Heart left ventricle (tissue), 16 donors: ENCODE measurements at regions of chr2 and their contacts with region 1.

Region 1: GRCh38 chr2:105919826-105920225 is 175.1 kb downstream of the NCK2 start:
- DNase-seq: no peak
- ATAC-seq: peak in 1 of 4 donors; percentile 11
- H3K4me3 ChIP-seq: no peak overlapping the region
- H3K27ac ChIP-seq: peak overlapping the region in 6 of 12 donors; percentile 11 to 67 (median 47)
- H3K4me1 ChIP-seq: peaks cover 0 to 19% (median 0%) of the 10 kb centered on the region in 12 donors
- H3K27me3 ChIP-seq: no peaks in the 10 kb centered on the region
- CTCF ChIP-seq: peak in 11 of 12 donors; percentile 11 to 51 (median 40)
- POLR2A ChIP-seq: no peak

Region 2: GRCh38 chr2:106011380-106011779 is 91.6 kb after region 1 on chr2:
- intact Hi-C with region 1: loop called in 1 of 10 experiments (anchors 10 kb)
- DNase-seq: peak in 1 of 5 donors; percentile 27
- ATAC-seq: peak in 2 of 4 donors; percentile 70 to 97
- H3K4me3 ChIP-seq: no peak overlapping the region
- H3K27ac ChIP-seq: peak overlapping the region in 10 of 12 donors; percentile 38 to 91 (median 75)
- H3K4me1 ChIP-seq: peaks cover 0 to 24% (median 8%) of the 10 kb centered on the region in 12 donors
- H3K27me3 ChIP-seq: no peaks in the 10 kb centered on the region
- CTCF ChIP-seq: no peak
- POLR2A ChIP-seq: no peak

Region 3: GRCh38 chr2:106065268-106065982 is 145.6 kb after region 1 on chr2:
- intact Hi-C with region 1: loop called in 3 of 10 experiments (anchors 10 kb)
- DNase-seq: peak; percentile 27 to 73 (median 46)
- ATAC-seq: peak in 3 of 4 donors; percentile 57 to 81 (median 70)
- H3K4me3 ChIP-seq: peak overlapping the region; percentile 44 to 71 (median 56)
- H3K27ac ChIP-seq: peak overlapping the region in 4 of 12 donors; percentile 30 to 46 (median 38)
- H3K4me1 ChIP-seq: peaks cover 0 to 19% (median 7%) of the 10 kb centered on the region in 12 donors
- H3K27me3 ChIP-seq: peaks cover 0 to 21% (median 10%) of the 10 kb centered on the region in 9 donors
- CTCF ChIP-seq: no peak
- POLR2A ChIP-seq: no peak

Region 4: DNA sequence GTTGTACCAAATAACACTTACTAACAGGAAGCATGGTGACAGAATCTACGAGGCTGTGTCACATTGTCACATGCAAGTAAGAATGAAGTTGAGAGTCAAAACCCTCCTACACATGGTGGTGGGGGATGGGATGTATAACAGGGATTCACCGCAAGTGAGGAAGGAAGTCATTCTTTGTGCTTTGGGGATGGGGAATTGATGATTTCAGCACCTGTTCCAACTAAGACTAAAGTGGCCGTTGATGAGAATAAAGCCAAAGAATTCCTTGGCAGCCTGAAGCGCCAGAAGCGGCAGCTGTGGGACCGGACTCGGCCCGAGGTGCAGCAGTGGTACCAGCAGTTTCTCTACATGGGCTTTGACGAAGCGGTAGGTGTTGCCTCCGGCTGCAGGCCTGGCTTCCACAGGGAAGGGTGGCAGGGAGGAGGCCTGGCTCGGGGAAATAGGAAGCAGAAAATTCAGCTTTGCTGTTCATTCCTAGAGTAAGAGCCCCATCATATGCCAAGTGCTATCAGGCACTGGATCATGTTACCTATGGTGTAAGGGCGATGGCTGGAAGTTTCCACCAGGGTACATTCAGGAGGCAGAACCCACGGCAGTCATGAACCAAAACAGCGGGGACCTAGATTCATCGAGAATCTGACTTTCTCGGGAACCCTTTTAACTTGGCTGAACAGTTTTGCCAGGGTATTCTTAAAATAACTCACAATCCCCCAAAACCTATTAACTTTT is 154.0 kb after region 1 on chr2:
- intact Hi-C with region 1: loop called in 3 of 10 experiments (anchors 10 kb)
- DNase-seq: no peak
- ATAC-seq: peak in 1 of 4 donors; percentile 74
- H3K4me3 ChIP-seq: no peak overlapping the region
- H3K27ac ChIP-seq: no peak overlapping the region
- H3K4me1 ChIP-seq: peaks cover 0 to 12% (median 0%) of the 10 kb centered on the region in 12 donors
- H3K27me3 ChIP-seq: no peaks in the 10 kb centered on the region
- CTCF ChIP-seq: no peak
- POLR2A ChIP-seq: no peak

Region 5: GRCh38 chr2:106085181-106085940 is 165.5 kb after region 1 on chr2:
- intact Hi-C with region 1: loop called in 1 of 10 experiments (anchors 10 kb)
- DNase-seq: peak in 3 of 5 donors; percentile 48 to 55 (median 51)
- ATAC-seq: peak in 3 of 4 donors; percentile 61 to 84 (median 72)
- H3K4me3 ChIP-seq: no peak overlapping the region
- H3K27ac ChIP-seq: peak overlapping the region in 1 of 12 donors; percentile 7
- H3K4me1 ChIP-seq: peaks cover 0 to 7% (median 0%) of the 10 kb centered on the region in 12 donors
- H3K27me3 ChIP-seq: no peaks in the 10 kb centered on the region
- CTCF ChIP-seq: peak; percentile 19 to 67 (median 47)
- POLR2A ChIP-seq: no peak

Region 6: DNA sequence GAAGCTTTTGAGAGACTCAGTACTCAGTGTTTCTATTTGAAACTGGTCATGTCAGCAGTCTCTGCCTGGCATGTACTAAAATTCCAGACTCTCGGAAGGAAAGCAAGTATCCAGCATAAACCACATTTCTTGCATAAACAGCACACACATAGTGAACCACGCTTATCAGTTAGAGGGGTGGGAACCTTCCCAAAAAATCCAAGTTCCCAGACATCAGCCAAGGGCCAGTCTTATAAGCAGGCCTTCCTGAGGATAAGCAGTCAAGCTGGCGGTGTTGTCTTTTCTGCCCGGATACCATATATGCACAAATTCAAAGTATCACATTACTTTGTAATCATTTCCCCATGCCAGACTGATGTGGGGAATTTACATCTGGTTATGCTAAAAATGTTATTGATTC is 892.6 kb after region 1 on chr2:
- intact Hi-C with region 1: no loop called
- DNase-seq: no peak
- ATAC-seq: peak in 1 of 4 donors; percentile 49
- H3K4me3 ChIP-seq: no peak overlapping the region
- H3K27ac ChIP-seq: peak overlapping the region in 3 of 12 donors; percentile 1 to 46 (median 45)
- H3K4me1 ChIP-seq: peaks cover 0 to 4% (median 0%) of the 10 kb centered on the region in 12 donors
- H3K27me3 ChIP-seq: no peaks in the 10 kb centered on the region
- CTCF ChIP-seq: no peak
- POLR2A ChIP-seq: no peak